ENCODE measurements at regions of chr2 and their contacts with region 1.

Region 1: DNA sequence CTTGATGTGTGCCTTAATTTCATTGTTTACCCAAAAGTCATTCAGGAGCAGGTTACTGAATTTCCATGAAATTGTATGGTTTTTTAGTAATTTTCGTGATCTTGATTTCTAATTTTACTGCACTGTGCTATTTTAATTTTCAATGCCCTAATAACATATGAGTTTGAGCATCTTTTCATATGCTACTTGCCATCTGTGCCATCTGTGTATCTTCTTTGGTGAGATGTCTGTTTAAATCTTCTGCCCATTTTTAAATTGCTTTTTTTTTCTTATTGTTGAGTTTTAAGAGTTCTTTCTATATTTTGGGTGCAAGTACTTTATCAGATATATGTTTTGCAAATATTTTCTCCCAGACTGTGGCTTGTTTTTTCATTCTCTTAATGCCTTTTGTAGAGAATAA is 165.9 kb downstream of the ST6GAL2 start:
- DNase-seq: no peak
- H3K4me3 ChIP-seq: no peak overlapping the region
- CTCF ChIP-seq: no peak

Region 2: GRCh38 chr2:106653464-106653863 is 66.6 kb before region 1 on chr2:
- in situ Hi-C with region 1: loop called (anchors 10 kb)
- DNase-seq: no peak
- H3K4me3 ChIP-seq: no peak overlapping the region
- CTCF ChIP-seq: no peak

Measured in astrocyte of the cerebellum (primary cell).